MCF 10A (cell line): ENCODE measurements at regions of chr15 and their contacts with region 1.

Region 1: DNA sequence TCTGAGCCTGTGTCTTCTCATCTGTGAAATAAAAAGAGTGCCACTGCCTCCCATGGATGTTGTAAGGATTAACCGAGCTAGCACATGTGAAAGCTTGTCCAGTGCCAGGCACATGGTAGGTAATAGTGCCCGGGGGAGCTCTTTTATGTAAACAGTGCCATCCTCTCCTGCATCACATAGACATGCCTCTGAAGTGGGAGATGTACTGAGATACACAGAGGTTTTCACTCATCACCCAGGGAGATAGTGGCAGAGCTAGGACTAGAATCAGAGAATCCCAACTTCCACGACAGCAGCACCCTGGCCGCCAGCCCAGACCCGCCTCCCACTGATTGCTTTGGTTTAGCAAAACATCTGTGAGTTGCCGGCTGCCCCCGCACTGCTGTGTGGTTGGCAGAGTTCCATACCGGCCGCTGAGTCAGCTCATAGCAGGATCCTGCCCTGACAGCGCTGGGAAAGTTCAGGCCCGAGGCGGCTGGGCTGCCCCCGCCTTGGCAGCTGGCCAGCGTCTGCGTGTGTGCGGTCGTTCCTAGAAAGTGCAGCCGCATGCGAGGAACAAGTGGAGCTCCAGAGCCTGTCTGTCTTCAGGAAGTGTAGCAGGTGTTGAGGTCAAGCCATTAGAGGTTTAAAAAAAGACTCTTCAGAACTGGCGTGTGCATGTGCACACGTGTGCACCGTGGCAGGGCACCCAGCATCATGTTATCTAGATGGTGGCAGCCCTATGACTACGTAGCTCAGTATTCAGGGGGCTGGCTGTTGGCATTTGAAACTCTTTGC is 5.0 kb downstream of the ARID3B start:
- DNase-seq: peak; percentile 99
- H3K4me3 Mint-ChIP-seq: no peak overlapping the region
- H3K27ac Mint-ChIP-seq: no peak overlapping the region
- H3K4me1 Mint-ChIP-seq: peaks cover 34% of the 10 kb centered on the region
- H3K27me3 Mint-ChIP-seq: peaks cover 38% of the 10 kb centered on the region
- CTCF ChIP-seq: no peak

Region 2: GRCh38 chr15:74340139-74340538 is 205.9 kb before region 1 on chr15:
- CTCF ChIA-PET with region 1: no interaction called
- POLR2A ChIA-PET with region 1: no interaction called
- intact Hi-C with region 1: no loop called
- DNase-seq: peak; percentile 26
- H3K4me3 Mint-ChIP-seq: no peak overlapping the region
- H3K27ac Mint-ChIP-seq: no peak overlapping the region
- H3K4me1 Mint-ChIP-seq: peaks cover 15% of the 10 kb centered on the region
- H3K27me3 Mint-ChIP-seq: no peaks in the 10 kb centered on the region
- CTCF ChIP-seq: no peak

Region 3: DNA sequence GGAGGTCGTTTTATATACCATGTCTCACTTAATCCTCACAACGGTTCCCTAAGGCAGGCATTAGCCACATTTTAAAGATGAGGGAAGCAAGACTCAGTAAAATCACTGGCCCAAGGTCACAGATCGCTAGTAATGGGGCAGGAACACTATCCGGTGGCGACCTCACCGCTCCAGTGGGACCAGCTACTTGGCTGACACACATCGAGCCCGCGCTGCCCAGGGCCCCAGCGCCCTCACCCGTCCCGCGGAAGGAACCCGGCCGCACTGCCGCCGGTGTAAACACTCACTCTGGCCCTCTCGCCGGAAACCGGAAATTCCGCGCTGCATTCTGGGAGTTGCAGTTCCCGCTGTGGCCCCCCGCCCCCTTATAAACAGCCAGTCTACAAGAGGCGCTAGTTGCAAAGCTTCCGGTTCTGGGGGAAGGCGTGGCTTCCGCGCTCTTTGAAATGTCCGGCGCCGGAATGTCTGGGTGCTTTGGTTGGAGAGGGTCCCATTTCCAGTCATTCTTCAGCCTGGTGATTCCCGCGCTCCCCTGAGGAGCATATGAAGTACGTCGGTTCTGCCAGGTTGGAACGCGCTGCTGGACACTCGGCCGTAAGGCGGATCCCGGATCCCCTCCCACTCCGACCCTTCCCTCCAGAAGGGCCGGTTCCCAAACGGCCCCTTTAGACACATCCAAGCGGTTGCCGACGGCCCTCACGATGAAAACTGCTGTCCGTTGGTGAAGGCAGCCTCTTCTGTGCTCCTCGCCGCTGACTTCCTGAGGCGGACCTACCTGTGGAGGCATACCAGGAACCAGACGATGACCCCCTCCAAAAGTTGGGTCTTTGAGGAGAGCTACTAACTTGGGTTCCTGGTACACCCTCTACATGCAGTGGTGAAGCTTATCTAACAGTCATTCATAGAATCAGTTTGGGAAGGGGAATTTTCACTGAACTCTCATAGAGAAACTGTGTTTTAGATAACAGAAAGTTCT is 84.9 kb before region 1 on chr15 and contains the start of gene UBL7:
- CTCF ChIA-PET with region 1: interaction called, 5 read pairs
- POLR2A ChIA-PET with region 1: interaction called, 32 read pairs
- intact Hi-C with region 1: loop called (anchors 2 kb)
- DNase-seq: peak; percentile 97
- H3K4me3 Mint-ChIP-seq: peak within 1 kb of the TSS; percentile 93
- H3K27ac Mint-ChIP-seq: peak within 1 kb of the TSS; percentile 70
- H3K4me1 Mint-ChIP-seq: peaks cover 30% of the 10 kb centered on the region
- H3K27me3 Mint-ChIP-seq: no peaks in the 10 kb centered on the region
- CTCF ChIP-seq: no peak
- total RNA-seq, gene UBL7: 55.5 and 56.4 TPM in 2 replicates

Region 4: GRCh38 chr15:74489518-74490338 is 56.3 kb before region 1 on chr15:
- CTCF ChIA-PET with region 1: interaction called, 5 read pairs
- POLR2A ChIA-PET with region 1: interaction called, 5 read pairs
- intact Hi-C with region 1: loop called (anchors 2 kb)
- DNase-seq: peak; percentile 53
- H3K4me3 Mint-ChIP-seq: no peak overlapping the region
- H3K27ac Mint-ChIP-seq: no peak overlapping the region
- H3K4me1 Mint-ChIP-seq: no peaks in the 10 kb centered on the region
- H3K27me3 Mint-ChIP-seq: no peaks in the 10 kb centered on the region
- CTCF ChIP-seq: peak; percentile 70

Region 5: GRCh38 chr15:74511583-74511982 is 34.5 kb before region 1 on chr15:
- CTCF ChIA-PET with region 1: no interaction called
- POLR2A ChIA-PET with region 1: no interaction called
- intact Hi-C with region 1: no loop called
- DNase-seq: no peak
- H3K4me3 Mint-ChIP-seq: no peak overlapping the region
- H3K27ac Mint-ChIP-seq: no peak overlapping the region
- H3K4me1 Mint-ChIP-seq: no peaks in the 10 kb centered on the region
- H3K27me3 Mint-ChIP-seq: no peaks in the 10 kb centered on the region
- CTCF ChIP-seq: no peak

Region 6: DNA sequence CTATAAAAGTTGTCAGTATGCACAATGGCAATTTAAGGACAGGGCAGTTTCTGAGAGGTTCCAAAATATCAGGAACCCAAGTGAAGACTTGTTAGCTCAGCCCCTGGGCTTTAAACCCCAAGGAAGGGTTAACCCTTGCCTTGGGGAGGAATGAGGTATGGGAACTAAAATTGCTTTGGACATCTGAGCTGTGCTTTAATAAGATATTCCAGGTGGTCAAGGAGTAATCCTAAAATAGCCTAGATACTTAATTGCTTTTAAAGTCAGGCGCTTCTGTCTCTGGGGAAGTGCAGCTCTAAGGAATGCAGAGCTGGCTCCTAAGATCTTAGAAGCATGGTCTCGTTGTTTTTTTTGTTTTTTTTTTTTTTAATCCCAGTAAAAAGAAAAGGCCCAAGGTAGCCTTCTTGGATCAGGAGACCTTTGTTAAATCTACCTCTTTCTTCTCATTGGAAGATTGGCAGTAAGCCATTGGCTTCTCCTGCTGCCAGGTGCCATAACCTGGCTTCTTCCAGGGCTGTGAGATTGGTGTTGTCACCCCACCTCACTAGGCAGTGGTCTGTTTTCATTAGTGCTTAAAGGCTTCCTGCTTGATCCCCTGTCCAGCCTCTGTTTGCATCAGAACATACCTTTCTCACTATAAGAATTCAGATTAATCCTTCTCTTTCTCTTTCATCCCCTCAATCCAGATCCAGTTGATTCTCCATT is 19.5 kb after region 1 on chr15:
- CTCF ChIA-PET with region 1: no interaction called
- POLR2A ChIA-PET with region 1: interaction called, 10 read pairs
- intact Hi-C with region 1: no loop called
- DNase-seq: no peak
- H3K4me3 Mint-ChIP-seq: no peak overlapping the region
- H3K27ac Mint-ChIP-seq: no peak overlapping the region
- H3K4me1 Mint-ChIP-seq: no peaks in the 10 kb centered on the region
- H3K27me3 Mint-ChIP-seq: no peaks in the 10 kb centered on the region
- CTCF ChIP-seq: no peak

Region 7: DNA sequence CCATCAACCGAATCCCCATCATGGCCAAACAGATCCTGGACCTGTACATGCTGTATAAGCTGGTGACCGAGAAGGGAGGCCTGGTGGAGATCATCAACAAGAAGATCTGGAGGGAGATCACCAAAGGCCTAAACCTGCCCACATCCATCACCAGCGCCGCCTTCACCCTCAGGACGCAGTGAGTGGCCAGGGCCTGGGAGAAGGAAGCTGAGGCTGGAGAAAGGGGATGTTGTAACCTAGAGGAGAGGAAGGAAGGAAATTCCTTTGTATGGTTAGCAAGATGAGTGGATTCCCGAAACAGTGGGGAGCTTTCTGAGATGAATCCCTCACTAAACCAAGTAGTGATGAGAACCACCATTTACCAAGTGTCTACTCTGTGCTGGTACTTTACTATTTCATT is 43.8 kb after region 1 on chr15:
- CTCF ChIA-PET with region 1: interaction called, 5 read pairs
- POLR2A ChIA-PET with region 1: interaction called, 20 read pairs
- intact Hi-C with region 1: no loop called
- DNase-seq: no peak
- H3K4me3 Mint-ChIP-seq: no peak overlapping the region
- H3K27ac Mint-ChIP-seq: peak overlapping the region; percentile 39
- H3K4me1 Mint-ChIP-seq: peaks cover 6% of the 10 kb centered on the region
- H3K27me3 Mint-ChIP-seq: no peaks in the 10 kb centered on the region
- CTCF ChIP-seq: no peak

Region 8: GRCh38 chr15:74598126-74598842 is 52.2 kb after region 1 on chr15:
- CTCF ChIA-PET with region 1: interaction called, 6 read pairs
- POLR2A ChIA-PET with region 1: interaction called, 13 read pairs
- intact Hi-C with region 1: no loop called
- DNase-seq: peak; percentile 92
- H3K4me3 Mint-ChIP-seq: peak overlapping the region; percentile 80
- H3K27ac Mint-ChIP-seq: peak overlapping the region; percentile 88
- H3K4me1 Mint-ChIP-seq: peaks cover 9% of the 10 kb centered on the region
- H3K27me3 Mint-ChIP-seq: no peaks in the 10 kb centered on the region
- CTCF ChIP-seq: no peak